ENCODE measurements at regions of chr3 and their contacts with region 1.

Region 1: DNA sequence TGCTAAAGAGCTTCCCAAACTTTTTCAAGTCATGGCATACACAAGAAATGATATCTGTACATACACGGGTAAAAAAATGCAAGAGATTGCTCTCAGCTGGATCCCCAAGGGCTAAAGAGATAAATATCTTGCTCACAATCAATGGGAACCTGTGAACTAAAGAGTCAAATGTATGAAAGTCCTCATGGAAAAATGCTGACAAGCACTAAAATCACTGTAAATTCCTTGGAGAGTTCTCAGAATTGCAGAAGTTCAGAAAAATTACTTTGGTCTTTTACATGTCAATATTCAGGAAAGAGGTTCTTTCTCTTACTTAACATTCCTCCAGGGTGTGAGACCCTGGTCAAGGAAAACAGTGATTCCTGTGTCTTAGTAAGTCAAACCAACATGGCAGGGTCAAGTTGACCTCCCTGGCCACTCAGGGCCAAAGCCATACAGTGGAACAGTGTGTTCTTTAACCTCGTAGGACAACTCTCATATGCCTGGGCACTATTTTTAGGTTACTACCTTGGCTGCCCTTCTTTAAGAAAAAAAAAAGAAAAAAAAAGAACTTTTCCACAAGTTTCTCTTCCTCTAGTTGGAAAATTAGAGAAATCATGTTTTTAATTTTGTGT is 12.7 kb downstream of the SSR3 start:
- DNase-seq: no peak
- H3K4me3 Mint-ChIP-seq: no peak overlapping the region
- H3K27ac Mint-ChIP-seq: no peak overlapping the region
- H3K4me1 Mint-ChIP-seq: peaks cover 12% of the 10 kb centered on the region
- H3K27me3 Mint-ChIP-seq: no peaks in the 10 kb centered on the region

Region 2: DNA sequence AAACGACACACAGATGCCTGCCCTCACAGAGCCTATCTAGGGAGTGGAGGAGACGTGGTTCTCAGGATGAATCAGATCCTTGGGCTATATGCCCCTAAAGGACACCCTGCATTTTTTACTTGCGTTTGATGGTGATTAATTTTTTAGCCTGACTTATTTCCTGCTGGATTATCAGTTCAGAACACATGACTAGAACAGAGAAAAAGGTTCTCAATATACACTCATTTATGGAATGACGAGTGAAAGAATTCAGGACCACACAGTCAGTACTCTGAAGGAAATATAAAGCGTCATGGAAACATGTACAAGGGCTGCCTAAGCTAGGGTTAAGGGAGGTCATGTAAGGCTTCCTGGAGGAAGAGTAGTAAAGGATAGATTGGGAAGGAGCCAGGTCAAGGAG is 109.1 kb before region 1 on chr3:
- CTCF ChIA-PET with region 1: no interaction called
- intact Hi-C with region 1: no loop called
- DNase-seq: no peak
- H3K4me3 Mint-ChIP-seq: no peak overlapping the region
- H3K27ac Mint-ChIP-seq: no peak overlapping the region
- H3K4me1 Mint-ChIP-seq: no peaks in the 10 kb centered on the region
- H3K27me3 Mint-ChIP-seq: peaks cover 9% of the 10 kb centered on the region

Region 3: DNA sequence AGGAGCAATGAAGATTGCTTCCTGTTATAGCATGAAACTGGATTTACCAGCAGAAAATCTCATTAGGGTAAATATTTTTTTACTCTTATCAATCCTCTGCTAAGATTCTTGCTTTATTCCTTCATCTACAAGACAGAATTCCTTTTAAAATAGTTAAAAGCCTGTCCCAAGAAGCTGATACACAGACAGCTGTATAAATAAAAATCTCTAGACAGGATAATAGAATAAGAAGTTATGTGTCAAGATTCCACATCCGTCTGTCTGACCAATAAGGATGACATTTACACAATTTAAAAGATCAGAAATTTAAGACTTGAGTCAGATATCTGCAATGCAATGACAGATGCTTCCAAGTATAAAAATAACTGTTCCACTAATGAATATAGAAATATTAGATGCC is 44.9 kb before region 1 on chr3:
- CTCF ChIA-PET with region 1: no interaction called
- intact Hi-C with region 1: no loop called
- DNase-seq: no peak
- H3K4me3 Mint-ChIP-seq: no peak overlapping the region
- H3K27ac Mint-ChIP-seq: no peak overlapping the region
- H3K4me1 Mint-ChIP-seq: no peaks in the 10 kb centered on the region
- H3K27me3 Mint-ChIP-seq: no peaks in the 10 kb centered on the region

Region 4: GRCh38 chr3:156525808-156526207 is 16.4 kb before region 1 on chr3:
- CTCF ChIA-PET with region 1: interaction called, 12 read pairs
- intact Hi-C with region 1: no loop called
- DNase-seq: no peak
- H3K4me3 Mint-ChIP-seq: no peak overlapping the region
- H3K27ac Mint-ChIP-seq: no peak overlapping the region
- H3K4me1 Mint-ChIP-seq: peaks cover 15% of the 10 kb centered on the region
- H3K27me3 Mint-ChIP-seq: peaks cover 12% of the 10 kb centered on the region

Region 5: DNA sequence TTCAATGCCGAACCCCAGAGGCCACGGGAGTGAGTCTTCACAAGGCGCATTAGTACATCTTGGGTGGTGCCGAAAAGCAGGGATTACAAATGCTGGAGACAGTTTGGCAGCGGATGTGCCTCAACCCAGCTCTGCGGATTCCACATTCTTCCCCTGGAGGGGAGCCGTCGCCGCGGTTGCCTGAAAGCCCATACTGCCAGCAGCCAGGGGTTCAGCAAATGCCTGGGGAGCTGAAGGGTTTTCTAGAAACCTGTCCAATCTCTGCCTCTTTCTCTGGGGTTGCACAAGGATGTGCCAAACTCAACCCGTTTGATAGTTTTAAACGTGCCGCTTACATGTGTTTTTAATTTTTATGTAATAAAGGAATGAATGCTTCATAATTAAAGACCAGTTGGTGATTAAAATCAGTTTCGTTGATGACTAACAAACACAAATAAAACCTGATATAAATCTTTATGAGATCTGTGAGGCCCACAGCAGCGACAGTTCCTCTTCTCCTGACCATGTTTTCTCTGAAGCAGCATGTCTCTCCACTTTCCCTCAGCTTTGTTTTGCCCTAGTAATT is 209.3 kb after region 1 on chr3:
- CTCF ChIA-PET with region 1: no interaction called
- intact Hi-C with region 1: no loop called
- DNase-seq: no peak
- H3K4me3 Mint-ChIP-seq: no peak overlapping the region
- H3K27ac Mint-ChIP-seq: no peak overlapping the region
- H3K4me1 Mint-ChIP-seq: no peaks in the 10 kb centered on the region
- H3K27me3 Mint-ChIP-seq: peaks cover 11% of the 10 kb centered on the region

Region 6: DNA sequence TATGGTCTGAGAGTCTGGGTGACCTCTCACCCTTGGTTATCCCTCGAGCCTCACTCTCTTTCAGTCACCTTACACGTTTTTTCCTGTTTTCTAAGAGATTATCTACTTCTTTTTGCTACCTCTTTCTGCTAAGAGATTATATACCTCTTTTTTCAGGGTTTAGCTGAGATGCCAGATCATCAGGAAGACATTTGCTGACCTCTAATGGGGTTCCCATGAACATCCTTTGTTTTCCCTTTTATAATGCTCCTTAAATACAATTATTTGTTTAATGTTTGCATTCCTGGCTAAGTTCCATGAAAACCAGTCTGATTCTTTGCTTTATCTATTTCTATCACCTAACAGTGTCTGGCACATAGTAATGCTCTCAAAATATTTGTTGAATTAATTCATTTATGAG is 323.5 kb after region 1 on chr3:
- CTCF ChIA-PET with region 1: no interaction called
- intact Hi-C with region 1: no loop called
- DNase-seq: no peak
- H3K4me3 Mint-ChIP-seq: no peak overlapping the region
- H3K27ac Mint-ChIP-seq: no peak overlapping the region
- H3K4me1 Mint-ChIP-seq: no peaks in the 10 kb centered on the region
- H3K27me3 Mint-ChIP-seq: no peaks in the 10 kb centered on the region

Measured in activated naive CD4-positive, alpha-beta T cell treated with anti-CD3 and anti-CD28 coated beads for 36 hours (primary cell).